Activated CD4-positive, alpha-beta T cell treated with anti-CD3 and anti-CD28 coated beads for 36 hours (primary cell): ENCODE measurements at regions of chr17 and their contacts with region 1.

Region 1: GRCh38 chr17:73710095-73710592 is 65.9 kb upstream of the SDK2 start:
- DNase-seq: peak; percentile 79
- ATAC-seq: peak; percentile 63
- H3K4me3 Mint-ChIP-seq: no peak overlapping the region
- H3K27ac Mint-ChIP-seq: no peak overlapping the region
- H3K4me1 Mint-ChIP-seq: peaks cover 9% of the 10 kb centered on the region
- H3K27me3 Mint-ChIP-seq: no peaks in the 10 kb centered on the region

Region 2: GRCh38 chr17:73595479-73595878 is 114.7 kb before region 1 on chr17:
- CTCF ChIA-PET with region 1: no interaction called
- POLR2A ChIA-PET with region 1: no interaction called
- intact Hi-C with region 1: loop called in 1 of 2 experiments (anchors 1 kb)
- DNase-seq: peak; percentile 70
- ATAC-seq: peak; percentile 36
- H3K4me3 Mint-ChIP-seq: no peak overlapping the region
- H3K27ac Mint-ChIP-seq: no peak overlapping the region
- H3K4me1 Mint-ChIP-seq: peaks cover 45% of the 10 kb centered on the region
- H3K27me3 Mint-ChIP-seq: no peaks in the 10 kb centered on the region

Region 3: DNA sequence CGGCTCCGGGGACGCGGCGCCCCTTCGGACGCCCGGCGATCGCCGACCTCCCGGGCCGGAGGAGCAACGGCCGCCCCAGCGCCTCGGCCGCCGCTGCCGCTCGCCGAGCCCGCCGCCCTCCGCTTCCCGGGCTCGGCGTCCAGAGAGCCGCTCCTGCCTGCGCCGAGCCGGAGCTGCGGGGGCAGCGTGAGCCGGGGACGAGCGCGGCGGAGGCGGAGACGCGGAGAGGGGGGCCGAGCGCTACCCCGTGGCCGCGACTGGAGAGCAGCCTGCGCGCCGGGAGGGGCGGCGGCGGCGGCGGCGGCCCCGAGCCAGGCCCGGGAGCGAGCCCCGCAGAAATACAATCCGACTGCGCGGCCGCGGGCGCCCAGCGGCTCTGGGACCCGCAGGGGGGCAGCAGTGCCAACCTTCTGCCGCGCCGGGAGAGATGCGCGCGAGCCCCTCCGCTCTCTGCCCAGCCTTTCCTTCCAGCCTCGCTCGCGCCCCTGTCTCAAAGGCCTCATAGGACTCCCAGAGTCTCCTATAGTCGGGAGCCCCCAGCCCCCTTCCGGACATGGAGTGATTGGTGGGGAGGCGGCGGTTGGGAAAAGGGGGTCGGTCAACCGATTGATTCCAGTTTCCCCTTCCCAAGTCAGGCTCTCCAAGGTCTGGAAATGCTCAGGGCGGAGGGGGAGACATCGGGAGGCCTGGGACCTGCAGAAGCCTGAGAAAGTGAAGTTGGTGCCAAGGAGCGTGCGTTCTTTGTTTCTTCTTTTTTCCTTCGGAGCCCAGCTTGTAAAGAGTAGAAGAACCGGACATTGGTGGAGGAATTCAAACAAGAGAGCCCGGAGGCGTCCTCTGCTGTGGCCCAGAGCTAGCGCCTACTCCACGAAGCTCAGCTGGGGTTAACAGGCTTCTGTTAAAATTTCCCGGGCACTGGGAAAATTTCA is 64.8 kb before region 1 on chr17:
- CTCF ChIA-PET with region 1: interaction called, 5 read pairs
- POLR2A ChIA-PET with region 1: no interaction called
- intact Hi-C with region 1: loop called (anchors 2 to 5 kb)
- DNase-seq: peak; percentile 66
- ATAC-seq: peak; percentile 54
- H3K4me3 Mint-ChIP-seq: peak overlapping the region; percentile 32
- H3K27ac Mint-ChIP-seq: no peak overlapping the region
- H3K4me1 Mint-ChIP-seq: peaks cover 14% of the 10 kb centered on the region
- H3K27me3 Mint-ChIP-seq: peaks cover 12% of the 10 kb centered on the region

Region 4: GRCh38 chr17:73652996-73653395 is 57.1 kb before region 1 on chr17:
- CTCF ChIA-PET with region 1: no interaction called
- POLR2A ChIA-PET with region 1: no interaction called
- intact Hi-C with region 1: loop called (anchors 2 to 5 kb)
- DNase-seq: no peak
- ATAC-seq: no peak
- H3K4me3 Mint-ChIP-seq: no peak overlapping the region
- H3K27ac Mint-ChIP-seq: no peak overlapping the region
- H3K4me1 Mint-ChIP-seq: no peaks in the 10 kb centered on the region
- H3K27me3 Mint-ChIP-seq: no peaks in the 10 kb centered on the region

Region 5: GRCh38 chr17:73722165-73722564 is 12.0 kb after region 1 on chr17:
- CTCF ChIA-PET with region 1: interaction called, 10 read pairs
- POLR2A ChIA-PET with region 1: no interaction called
- intact Hi-C with region 1: no loop called
- DNase-seq: peak; percentile 57
- ATAC-seq: peak; percentile 90
- H3K4me3 Mint-ChIP-seq: no peak overlapping the region
- H3K27ac Mint-ChIP-seq: peak overlapping the region; percentile 79
- H3K4me1 Mint-ChIP-seq: peaks cover 47% of the 10 kb centered on the region
- H3K27me3 Mint-ChIP-seq: no peaks in the 10 kb centered on the region

Region 6: DNA sequence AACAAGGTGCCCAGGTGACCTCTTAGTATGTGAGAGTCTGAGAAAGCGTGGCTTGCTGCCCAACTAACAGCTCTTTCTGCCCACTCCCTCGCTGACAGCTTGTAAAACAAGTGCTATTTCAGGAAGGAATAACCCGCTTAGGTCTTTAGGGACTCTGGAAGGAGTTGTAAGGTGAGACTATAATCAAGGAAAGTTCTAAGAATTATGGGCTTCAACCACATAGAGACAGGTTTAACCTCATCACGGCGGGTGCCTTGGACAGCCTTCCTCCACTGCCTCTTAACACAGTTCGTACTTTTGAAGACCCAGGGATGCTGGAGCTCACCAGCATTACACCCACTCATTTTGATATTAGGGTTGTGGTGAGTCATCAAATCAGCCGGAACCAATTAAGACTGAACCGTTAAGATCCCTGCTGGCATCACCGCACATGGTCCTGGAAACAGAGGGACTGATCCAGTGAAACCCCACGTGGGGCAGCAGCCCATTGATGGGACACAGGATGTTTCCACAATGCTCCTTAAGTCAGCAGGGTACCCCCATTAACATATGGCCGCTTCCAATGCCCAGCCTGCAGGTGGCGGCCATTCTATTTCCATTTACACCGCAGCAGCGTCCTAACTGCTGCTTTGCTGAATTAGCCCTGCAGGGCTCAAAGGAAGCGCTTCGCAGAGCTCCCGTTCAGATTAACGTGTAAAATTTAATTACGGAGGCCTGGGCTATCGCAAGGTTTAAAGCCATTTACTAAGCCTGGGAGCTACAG is 110.7 kb after region 1 on chr17:
- CTCF ChIA-PET with region 1: no interaction called
- POLR2A ChIA-PET with region 1: no interaction called
- intact Hi-C with region 1: no loop called
- DNase-seq: no peak
- ATAC-seq: no peak
- H3K4me3 Mint-ChIP-seq: no peak overlapping the region
- H3K27ac Mint-ChIP-seq: no peak overlapping the region
- H3K4me1 Mint-ChIP-seq: peaks cover 36% of the 10 kb centered on the region
- H3K27me3 Mint-ChIP-seq: no peaks in the 10 kb centered on the region